Calu3 (cell line): ENCODE measurements at regions of chr5 and their contacts with region 1.

Region 1: DNA sequence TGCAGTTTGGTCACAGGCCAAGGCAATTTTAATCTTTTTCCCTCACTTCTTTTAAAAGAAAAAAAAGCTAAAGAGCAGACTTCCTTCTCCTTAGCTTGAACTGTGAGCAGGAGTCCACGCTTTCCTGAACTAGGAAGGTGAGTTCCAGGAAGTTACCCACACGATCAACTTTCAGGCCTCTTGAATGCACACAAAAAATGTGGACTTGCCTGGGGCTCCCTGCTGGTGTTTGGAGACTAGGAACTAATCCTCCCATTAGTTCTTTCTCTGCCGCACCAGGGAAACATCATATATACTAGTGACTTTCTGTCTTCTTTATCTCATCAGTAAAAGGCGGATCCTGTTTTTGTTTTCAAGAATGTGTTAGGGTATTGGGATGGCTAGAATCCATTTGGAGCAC is 240.0 kb downstream of the GOLPH3 start:
- DNase-seq: no peak
- H3K4me3 Mint-ChIP-seq: no peak overlapping the region
- H3K27ac Mint-ChIP-seq: no peak overlapping the region
- H3K4me1 Mint-ChIP-seq: no peaks in the 10 kb centered on the region
- H3K27me3 Mint-ChIP-seq: peaks cover 29% of the 10 kb centered on the region
- CTCF ChIP-seq: no peak

Region 2: GRCh38 chr5:32076699-32077695 is 142.8 kb after region 1 on chr5:
- CTCF ChIA-PET with region 1: interaction called, 7 read pairs
- intact Hi-C with region 1: loop called (anchors 2 kb)
- DNase-seq: peak; percentile 42
- H3K4me3 Mint-ChIP-seq: no peak overlapping the region
- H3K27ac Mint-ChIP-seq: no peak overlapping the region
- H3K4me1 Mint-ChIP-seq: no peaks in the 10 kb centered on the region
- H3K27me3 Mint-ChIP-seq: no peaks in the 10 kb centered on the region
- CTCF ChIP-seq: peak; percentile 52

Region 3: DNA sequence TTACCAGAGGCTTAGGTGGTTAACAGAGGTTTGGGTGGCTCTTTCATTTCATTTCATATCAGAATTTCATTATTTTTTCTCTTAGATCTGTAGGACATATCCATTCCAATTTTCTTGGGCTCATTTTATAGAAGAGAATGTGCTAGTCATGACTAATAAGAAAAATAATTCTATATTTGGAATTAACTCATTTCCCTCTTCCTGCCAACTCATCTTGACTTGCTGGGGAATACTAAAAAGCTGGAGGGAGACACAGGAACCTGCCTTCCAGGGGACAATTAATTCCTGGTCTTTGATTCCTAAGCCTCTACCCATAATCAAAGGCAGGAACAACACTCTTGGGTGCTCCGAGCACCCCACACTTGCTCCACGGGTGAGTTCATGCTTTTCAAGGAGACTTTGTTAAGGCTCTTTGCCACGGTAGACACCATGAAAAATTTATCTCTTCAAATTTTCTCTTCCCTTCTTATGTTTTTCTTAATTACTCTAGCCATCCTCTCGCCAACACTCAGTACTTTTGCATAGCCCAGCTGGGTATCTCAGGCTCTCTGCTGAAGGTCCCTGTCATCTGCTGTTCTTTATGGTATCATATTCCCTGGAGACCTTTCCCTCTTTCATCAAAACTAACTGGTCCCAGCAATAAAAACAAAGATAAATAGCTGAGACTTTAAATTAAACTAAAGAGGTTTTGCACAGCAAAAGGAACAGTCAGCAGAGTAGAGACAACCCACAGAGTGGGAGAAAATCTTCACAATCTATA is 1050.9 kb after region 1 on chr5:
- CTCF ChIA-PET with region 1: no interaction called
- intact Hi-C with region 1: no loop called
- DNase-seq: no peak
- H3K4me3 Mint-ChIP-seq: no peak overlapping the region
- H3K27ac Mint-ChIP-seq: no peak overlapping the region
- H3K4me1 Mint-ChIP-seq: no peaks in the 10 kb centered on the region
- H3K27me3 Mint-ChIP-seq: no peaks in the 10 kb centered on the region
- CTCF ChIP-seq: no peak